Prostate gland (tissue), 2 donors: ENCODE measurements at regions of chr13 and their contacts with region 1.

Region 1: DNA sequence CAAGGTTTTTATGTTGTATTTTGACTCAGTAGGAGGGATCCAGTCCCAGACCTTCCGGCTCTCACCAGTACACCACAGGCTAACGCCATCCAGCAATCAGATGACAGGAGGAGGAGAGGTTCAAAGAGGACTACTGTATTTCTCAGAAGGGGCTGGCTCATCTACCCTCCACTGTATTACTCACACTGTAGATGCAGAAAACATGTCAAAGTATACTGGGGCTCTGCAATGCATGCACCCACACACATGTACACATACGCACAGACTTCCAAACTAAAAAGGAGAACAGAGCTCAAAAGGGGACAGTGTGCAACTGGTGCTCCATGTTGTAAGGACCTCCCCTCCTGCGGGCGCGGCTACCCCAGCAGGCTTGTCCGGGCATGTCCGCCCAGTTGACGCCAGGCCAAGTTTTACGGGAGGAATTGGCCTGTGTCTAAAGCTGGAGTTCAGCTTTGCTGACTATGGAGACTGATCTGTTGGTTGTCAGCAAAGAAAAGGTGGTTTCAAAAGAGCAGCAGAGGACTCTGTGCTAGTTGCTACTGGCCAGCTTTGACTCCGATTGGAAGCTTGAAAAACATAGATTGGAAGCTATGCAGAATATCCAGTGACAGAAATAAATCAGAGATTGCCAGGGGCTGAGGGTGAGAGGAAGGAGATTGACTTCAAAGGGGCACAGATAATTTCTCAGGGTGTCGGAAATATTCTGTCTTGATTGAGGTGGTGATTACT is 314.2 kb downstream of the DLEU7 start:
- DNase-seq: peak; percentile 76
- H3K4me3 ChIP-seq: no peak overlapping the region
- H3K27ac ChIP-seq: peak overlapping the region; percentile 8
- H3K4me1 ChIP-seq: peaks cover 4% of the 10 kb centered on the region
- H3K27me3 ChIP-seq: no peaks in the 10 kb centered on the region
- CTCF ChIP-seq: no peak
- POLR2A ChIP-seq: no peak

Region 2: DNA sequence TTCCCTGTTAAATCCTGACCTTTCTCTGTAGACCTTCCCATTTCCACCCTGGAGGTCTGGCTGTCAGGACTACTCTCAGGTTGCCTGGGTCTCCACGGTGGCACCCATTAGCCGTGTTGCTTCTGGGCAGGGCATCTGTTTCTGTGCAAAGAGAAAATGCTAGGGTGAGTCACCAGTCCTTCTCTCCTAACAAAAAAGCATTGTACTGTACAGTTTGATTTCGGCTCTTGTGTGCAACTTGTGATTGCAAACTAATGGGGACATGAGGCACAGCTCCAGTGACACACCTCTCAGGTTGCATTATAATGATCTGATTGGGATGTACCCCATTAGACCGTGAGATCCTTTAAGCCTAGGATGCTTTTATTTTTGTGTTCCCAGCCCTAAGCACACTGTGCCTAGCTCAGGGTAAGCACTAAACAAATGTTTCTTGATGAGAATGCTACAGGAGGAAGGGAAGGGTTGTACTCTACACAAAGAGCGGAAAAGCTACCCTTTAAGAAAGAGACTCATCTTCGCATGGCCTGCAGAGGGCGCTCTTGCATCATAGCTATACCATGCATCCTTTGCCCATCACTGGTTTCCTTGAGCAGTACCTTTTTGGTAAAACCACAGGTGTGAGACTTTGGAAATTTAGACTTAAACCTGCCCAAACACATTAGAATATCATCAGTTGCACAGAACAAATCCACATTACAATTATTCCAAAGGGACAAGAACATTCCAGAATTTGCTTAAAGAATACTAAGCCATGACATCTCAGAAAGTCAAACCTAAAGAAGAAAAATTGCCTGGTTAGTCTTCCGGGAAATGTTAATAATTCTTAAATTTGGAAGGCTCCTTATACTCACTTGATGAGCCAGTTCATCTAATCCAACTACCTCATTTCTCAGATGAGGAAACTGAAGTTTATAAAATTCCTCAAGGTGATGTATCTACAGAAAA is 552.7 kb before region 1 on chr13:
- intact Hi-C with region 1: loop called (anchors 5 kb)
- DNase-seq: peak; percentile 63
- H3K4me3 ChIP-seq: no peak overlapping the region
- H3K27ac ChIP-seq: peak overlapping the region in 1 of 2 donors; percentile 38
- H3K4me1 ChIP-seq: no peaks in the 10 kb centered on the region
- H3K27me3 ChIP-seq: no peaks in the 10 kb centered on the region
- CTCF ChIP-seq: peak; percentile 65 to 91 (median 85)
- POLR2A ChIP-seq: no peak

Region 3: DNA sequence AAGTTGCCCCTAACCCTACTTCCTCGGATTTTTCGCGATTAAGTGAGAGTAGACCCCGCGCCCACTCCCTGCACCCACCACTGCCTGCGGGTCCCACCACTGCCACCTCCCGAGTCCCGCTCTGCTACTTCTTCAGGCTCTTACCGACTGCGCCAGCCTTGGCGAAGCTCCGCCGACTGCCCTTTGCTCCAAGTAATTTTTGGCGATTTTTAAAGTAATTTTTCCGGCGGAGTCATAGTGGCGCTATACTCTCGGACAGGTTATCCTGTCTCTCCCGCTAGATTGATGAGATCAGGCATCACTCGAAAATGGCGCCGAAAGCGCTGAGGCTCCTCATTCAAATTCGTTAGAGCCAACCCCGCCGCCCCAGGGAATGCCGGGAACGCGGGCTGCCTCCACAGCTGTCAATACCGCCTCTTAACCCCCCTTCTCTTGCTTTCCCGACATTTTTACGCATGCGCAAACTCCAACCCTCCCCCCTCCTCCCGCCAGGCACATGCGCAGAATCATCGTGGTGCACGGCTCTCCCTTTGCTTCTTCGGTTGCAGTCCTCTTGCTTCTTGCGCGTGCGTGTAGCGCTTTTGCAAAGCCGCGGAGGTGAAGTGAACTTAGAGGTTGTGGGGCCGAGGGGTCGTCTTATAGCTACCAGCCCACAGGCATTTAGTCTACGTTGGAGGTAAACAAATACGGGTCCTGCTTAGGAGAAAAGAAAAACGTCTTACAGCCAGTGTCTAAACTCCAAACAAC is 447.5 kb before region 1 on chr13:
- intact Hi-C with region 1: loop called (anchors 5 kb)
- DNase-seq: peak; percentile 99
- H3K4me3 ChIP-seq: peak overlapping the region; percentile 65 to 75
- H3K27ac ChIP-seq: peak overlapping the region; percentile 91 to 92
- H3K4me1 ChIP-seq: no peaks in the 10 kb centered on the region
- H3K27me3 ChIP-seq: no peaks in the 10 kb centered on the region
- CTCF ChIP-seq: no peak
- POLR2A ChIP-seq: peak; percentile 67

Region 4: DNA sequence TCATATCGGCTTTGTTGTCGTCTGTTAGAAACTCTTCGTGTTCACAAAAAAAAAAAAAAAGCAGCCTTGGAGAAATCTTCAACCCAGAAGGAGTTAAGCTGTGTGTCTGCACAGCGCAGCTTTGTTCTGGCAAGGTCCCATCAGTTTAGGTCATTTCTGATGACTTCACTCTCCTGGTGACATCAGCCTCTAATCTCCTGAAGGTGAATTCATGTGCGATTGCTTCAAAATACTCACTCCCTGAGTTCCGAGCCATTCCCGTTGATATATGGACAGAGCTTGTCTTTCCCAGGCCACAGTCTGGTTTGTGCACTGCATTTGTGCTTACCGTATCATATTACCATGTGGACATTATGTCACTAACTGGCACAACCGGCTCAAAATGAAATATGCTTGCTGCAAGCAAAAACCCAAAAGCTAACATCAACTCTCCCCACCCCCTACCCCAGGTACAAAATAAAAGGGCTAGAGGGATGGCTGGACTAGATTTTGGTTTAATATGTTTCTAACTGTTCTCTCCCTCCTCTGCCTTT is 171.7 kb before region 1 on chr13:
- intact Hi-C with region 1: no loop called
- DNase-seq: peak; percentile 88
- H3K4me3 ChIP-seq: no peak overlapping the region
- H3K27ac ChIP-seq: peak overlapping the region; percentile 74 to 83
- H3K4me1 ChIP-seq: peaks cover 8% of the 10 kb centered on the region
- H3K27me3 ChIP-seq: no peaks in the 10 kb centered on the region
- CTCF ChIP-seq: no peak
- POLR2A ChIP-seq: peak; percentile 10

Region 5: DNA sequence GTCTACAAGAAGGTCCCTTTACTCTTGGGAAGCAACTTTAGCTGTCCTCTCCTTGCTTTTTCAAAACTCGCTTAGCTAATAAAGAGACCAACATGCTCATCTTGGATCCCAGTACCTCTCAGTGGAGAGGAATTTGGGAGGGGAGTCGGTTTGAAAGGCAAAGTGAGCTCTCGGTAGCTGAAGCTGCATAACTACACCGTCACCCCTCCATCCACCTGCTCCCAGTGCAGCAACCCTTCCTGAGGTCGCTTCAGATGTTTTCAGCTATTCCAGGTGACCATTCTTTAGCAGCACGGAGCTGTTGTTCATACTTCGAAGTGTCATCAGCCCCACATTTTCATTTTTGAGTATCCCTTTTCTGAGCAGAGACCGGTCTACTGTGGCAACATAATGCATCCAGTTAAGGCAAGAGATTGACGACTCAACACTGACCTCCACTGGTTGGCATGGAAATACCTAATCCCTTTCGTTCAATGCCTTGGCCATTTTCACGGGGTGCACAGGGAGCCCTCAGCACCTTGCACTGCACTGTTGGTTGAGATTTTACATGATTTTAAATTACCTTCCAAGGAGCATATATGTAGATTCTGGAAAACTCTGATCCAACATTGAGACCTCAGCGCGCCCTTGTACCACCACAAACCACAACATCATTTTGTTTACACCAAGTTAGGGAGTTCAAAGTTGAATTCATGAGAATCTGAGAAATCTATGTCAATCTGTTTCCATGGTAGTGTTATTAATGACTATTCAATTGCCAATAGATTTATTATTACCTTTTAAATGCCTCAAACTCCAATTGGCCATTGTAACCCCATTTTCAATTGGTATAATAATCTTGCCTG is 272.0 kb after region 1 on chr13:
- intact Hi-C with region 1: loop called (anchors 10 kb)
- DNase-seq: peak; percentile 44
- H3K4me3 ChIP-seq: no peak overlapping the region
- H3K27ac ChIP-seq: no peak overlapping the region
- H3K4me1 ChIP-seq: no peaks in the 10 kb centered on the region
- H3K27me3 ChIP-seq: no peaks in the 10 kb centered on the region
- CTCF ChIP-seq: peak in 3 of 4 experiments; percentile 50 to 71 (median 64)
- POLR2A ChIP-seq: no peak